Activated CD8-positive, alpha-beta memory T cell treated with anti-CD3 and anti-CD28 coated beads, Interleukin-2, amount 10 ng/mL, durations not matched to agents 7 days and 5 days (primary cell): ENCODE measurements at regions of chr11 and their contacts with region 1.

Region 1: DNA sequence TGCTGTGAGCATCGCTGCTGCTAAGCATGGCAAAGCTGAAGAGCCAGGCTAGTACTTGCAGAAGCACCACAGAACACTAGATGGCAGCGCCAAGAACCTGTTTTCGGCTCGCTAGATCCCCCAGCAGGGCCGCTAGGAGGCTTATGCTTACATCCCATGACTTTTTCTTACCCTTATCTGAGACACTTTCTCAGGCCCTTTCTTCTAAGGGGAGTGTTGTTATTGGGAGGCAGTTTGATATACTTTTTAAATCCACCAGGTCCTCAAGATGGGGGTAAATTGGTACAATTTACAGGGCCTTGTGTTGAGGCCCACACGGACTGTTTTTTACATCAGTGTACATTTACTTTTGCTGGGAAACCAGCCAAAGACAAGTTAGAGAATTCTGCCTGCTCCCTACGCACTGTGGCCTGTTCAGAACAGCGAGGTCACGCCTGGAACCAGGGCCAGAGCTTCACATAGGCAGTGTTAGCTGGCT is 4.0 kb downstream of the TRIM6 start:
- DNase-seq: peak; percentile 76
- ATAC-seq: peak; percentile 92
- H3K4me3 Mint-ChIP-seq: no peak overlapping the region
- H3K27ac Mint-ChIP-seq: no peak overlapping the region
- H3K4me1 Mint-ChIP-seq: peaks cover 10% of the 10 kb centered on the region
- H3K27me3 Mint-ChIP-seq: peaks cover 5% of the 10 kb centered on the region

Region 2: DNA sequence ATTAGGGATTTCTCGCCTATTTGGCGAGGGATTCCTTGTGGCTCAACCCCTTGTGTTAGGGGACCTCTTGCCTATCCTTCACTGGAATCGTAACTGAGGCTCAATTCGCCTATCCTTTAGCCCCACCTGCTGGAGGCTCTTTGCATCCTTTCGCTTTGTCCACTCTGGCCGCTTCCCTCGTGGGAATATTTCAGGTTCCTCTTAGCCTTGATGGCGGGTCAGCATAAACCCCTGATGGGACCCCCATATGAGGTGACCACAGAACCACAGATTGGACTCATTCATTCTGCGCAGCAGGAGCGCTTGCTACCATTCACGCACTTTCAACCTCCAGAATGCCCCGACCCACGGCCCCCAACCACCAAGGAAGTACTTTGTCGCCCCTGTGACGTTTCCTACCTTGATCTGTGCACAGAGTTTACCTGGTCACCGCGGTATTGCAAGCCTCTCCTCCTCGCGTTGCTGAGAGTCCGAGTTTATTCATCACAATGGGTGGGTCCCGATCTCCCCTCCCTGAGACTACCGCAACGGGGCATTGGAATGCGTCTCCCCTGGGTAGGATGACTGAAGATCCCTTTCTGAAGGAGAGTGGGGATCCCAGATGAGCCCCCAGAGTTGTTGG is 208.2 kb after region 1 on chr11 and contains the start of gene OR52N2:
- CTCF ChIA-PET with region 1: interaction called, 10 read pairs
- DNase-seq: peak; percentile 82
- ATAC-seq: peak; percentile 94
- H3K4me3 Mint-ChIP-seq: peak within 1 kb of the TSS; percentile 89
- H3K27ac Mint-ChIP-seq: peak within 1 kb of the TSS; percentile 66
- H3K4me1 Mint-ChIP-seq: peaks cover 13% of the 10 kb centered on the region
- H3K27me3 Mint-ChIP-seq: peaks cover 29% of the 10 kb centered on the region
- total RNA-seq, gene OR52N2: not detected

Region 3: DNA sequence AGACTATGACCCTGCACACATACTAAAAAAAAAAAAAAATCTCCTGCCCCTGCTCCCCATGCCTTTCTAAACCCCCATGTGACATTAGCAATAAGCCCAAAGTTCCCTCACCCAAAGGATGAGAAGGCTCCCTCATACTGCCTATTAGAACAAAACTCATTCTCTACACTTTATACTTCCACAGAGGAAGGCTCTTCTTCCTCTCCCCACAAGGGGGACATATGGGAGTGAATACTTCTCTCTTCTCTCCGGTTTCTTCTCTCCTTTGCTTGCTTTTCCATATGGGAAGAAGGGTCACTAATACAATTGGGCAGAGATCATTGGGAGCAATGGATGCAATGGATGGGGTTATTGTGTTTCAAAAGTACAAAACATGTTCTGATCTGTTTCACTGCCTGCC is 383.0 kb after region 1 on chr11:
- CTCF ChIA-PET with region 1: no interaction called
- DNase-seq: no peak
- ATAC-seq: no peak
- H3K4me3 Mint-ChIP-seq: no peak overlapping the region
- H3K27ac Mint-ChIP-seq: no peak overlapping the region
- H3K4me1 Mint-ChIP-seq: no peaks in the 10 kb centered on the region
- H3K27me3 Mint-ChIP-seq: peaks cover 4% of the 10 kb centered on the region